Heart left ventricle (tissue), 16 donors: ENCODE measurements at regions of chr4 and their contacts with region 1.

Region 1: GRCh38 chr4:10380735-10381134 is 76.5 kb downstream of the ZNF518B start:
- DNase-seq: no peak
- ATAC-seq: no peak
- H3K4me3 ChIP-seq: no peak overlapping the region
- H3K27ac ChIP-seq: no peak overlapping the region
- H3K4me1 ChIP-seq: no peaks in the 10 kb centered on the region
- H3K27me3 ChIP-seq: no peaks in the 10 kb centered on the region
- CTCF ChIP-seq: no peak
- POLR2A ChIP-seq: no peak

Region 2: DNA sequence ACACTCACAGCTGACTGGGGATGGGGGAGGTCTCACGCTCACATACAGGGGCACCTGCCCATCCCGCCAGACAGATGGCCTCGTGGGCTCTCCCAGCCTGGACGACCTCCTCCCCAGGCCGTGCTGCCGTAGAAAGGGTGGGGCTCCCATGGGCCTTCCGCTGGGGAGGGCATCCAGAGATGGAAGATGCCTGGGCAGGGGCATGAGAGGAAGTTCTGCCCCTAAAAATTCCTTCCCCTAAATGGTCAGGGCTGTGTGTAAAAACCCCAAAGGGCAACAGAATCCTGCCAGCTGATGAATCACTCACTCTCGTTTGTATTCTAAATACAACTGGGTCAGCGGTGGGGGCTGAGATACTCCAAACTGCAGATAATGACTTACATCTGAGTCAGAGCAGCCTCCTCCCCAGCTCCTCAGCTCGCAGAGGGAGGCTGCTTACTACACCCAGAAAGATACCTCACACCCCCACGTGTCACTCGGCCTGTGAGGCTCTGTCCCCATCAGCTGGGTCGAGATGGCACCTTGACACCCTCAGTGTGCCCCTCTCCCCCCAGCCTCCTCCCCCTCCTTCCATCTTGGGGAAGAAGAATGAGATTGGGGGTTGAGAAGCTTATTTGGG is 274.2 kb before region 1 on chr4:
- intact Hi-C with region 1: no loop called
- DNase-seq: peak in 4 of 5 donors; percentile 62 to 89 (median 72)
- ATAC-seq: peak; percentile 41 to 84 (median 76)
- H3K4me3 ChIP-seq: peak overlapping the region in 3 of 12 donors; percentile 1 to 5 (median 5)
- H3K27ac ChIP-seq: peak overlapping the region; percentile 47 to 82 (median 70)
- H3K4me1 ChIP-seq: peaks cover 26 to 100% (median 92%) of the 10 kb centered on the region in 12 donors
- H3K27me3 ChIP-seq: no peaks in the 10 kb centered on the region
- CTCF ChIP-seq: no peak
- POLR2A ChIP-seq: no peak

Region 3: GRCh38 chr4:10342866-10343265 is 37.9 kb before region 1 on chr4:
- intact Hi-C with region 1: loop called in 1 of 10 experiments (anchors 1 kb)
- DNase-seq: no peak
- ATAC-seq: no peak
- H3K4me3 ChIP-seq: no peak overlapping the region
- H3K27ac ChIP-seq: no peak overlapping the region
- H3K4me1 ChIP-seq: no peaks in the 10 kb centered on the region
- H3K27me3 ChIP-seq: peaks cover 0 to 10% (median 0%) of the 10 kb centered on the region in 9 donors
- CTCF ChIP-seq: no peak
- POLR2A ChIP-seq: no peak